Sciatic nerve (tissue), 2 donors: ENCODE measurements at regions of chr5 and their contacts with region 1.

Region 1: GRCh38 chr5:142922223-142922952 is 152.2 kb downstream of the ARHGAP26 start:
- DNase-seq: no peak
- ATAC-seq: peak; percentile 74

Region 2: GRCh38 chr5:143403593-143404415 is 481.4 kb after region 1 on chr5 and contains the start of gene NR3C1:
- intact Hi-C with region 1: loop called (anchors 10 kb)
- DNase-seq: peak; percentile 91
- ATAC-seq: peak; percentile 79
- total RNA-seq, gene NR3C1: 148 TPM